Endothelial cell of umbilical vein (primary cell): ENCODE measurements at regions of chr5 and their contacts with region 1.

Region 1: DNA sequence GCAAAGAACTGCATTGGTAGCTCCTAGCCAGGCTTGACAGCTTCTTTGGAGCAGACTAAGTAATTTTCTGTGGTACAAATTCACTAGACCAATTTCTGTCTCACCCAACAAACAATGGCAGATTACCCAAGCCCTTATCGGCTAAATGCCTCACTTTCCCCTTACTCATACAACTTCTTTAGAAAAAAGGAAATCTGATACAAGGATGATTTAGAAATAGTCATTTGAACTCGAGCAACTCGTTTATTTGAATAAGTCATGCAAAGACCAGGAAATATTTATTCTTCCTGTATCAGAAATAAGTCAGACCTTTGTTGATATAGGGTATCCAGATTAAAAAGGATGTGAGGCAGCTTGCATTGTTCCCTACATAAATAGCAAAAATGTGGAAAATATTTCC is 170.4 kb upstream of the CDH6 start:
- DNase-seq: peak; percentile 68
- H3K4me3 ChIP-seq: no peak overlapping the region
- H3K27ac ChIP-seq: no peak overlapping the region
- H3K4me1 ChIP-seq: peaks cover 12% of the 10 kb centered on the region
- H3K27me3 ChIP-seq: no peaks in the 10 kb centered on the region
- CTCF ChIP-seq: no peak
- POLR2A ChIP-seq: no peak

Region 2: GRCh38 chr5:30918171-30918570 is 104.9 kb before region 1 on chr5:
- CTCF ChIA-PET with region 1: no interaction called
- POLR2A ChIA-PET with region 1: no interaction called
- dilution Hi-C with region 1: no loop called
- intact Hi-C with region 1: no loop called
- DNase-seq: no peak
- H3K4me3 ChIP-seq: no peak overlapping the region
- H3K27ac ChIP-seq: no peak overlapping the region
- H3K4me1 ChIP-seq: no peaks in the 10 kb centered on the region
- H3K27me3 ChIP-seq: no peaks in the 10 kb centered on the region
- CTCF ChIP-seq: no peak
- POLR2A ChIP-seq: no peak

Region 3: DNA sequence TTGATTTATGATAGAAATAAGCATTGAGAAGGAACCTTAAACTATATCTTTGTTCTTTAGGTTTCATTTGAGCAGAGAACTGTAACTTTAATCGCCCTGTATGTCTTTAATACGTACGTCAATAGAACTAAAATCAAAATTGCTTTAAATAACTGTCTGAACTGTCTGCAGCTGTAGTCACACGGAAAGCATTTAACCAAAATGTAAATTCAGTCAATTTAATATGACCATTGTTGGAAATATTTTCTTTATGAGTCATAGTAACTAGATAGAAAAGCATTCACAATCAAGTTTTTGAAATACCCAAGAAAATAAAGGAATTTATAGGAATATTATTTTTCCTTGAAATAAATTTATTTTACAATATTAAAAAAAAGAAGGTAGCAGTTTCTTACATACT is 13.3 kb after region 1 on chr5:
- CTCF ChIA-PET with region 1: no interaction called
- POLR2A ChIA-PET with region 1: no interaction called
- dilution Hi-C with region 1: no loop called
- intact Hi-C with region 1: loop called (anchors 2 kb)
- DNase-seq: peak; percentile 39
- H3K4me3 ChIP-seq: no peak overlapping the region
- H3K27ac ChIP-seq: no peak overlapping the region
- H3K4me1 ChIP-seq: peaks cover 11% of the 10 kb centered on the region
- H3K27me3 ChIP-seq: no peaks in the 10 kb centered on the region
- CTCF ChIP-seq: no peak
- POLR2A ChIP-seq: no peak

Region 4: GRCh38 chr5:31047007-31047406 is 23.9 kb after region 1 on chr5:
- CTCF ChIA-PET with region 1: no interaction called
- POLR2A ChIA-PET with region 1: no interaction called
- dilution Hi-C with region 1: no loop called
- intact Hi-C with region 1: no loop called
- DNase-seq: no peak
- H3K4me3 ChIP-seq: no peak overlapping the region
- H3K27ac ChIP-seq: no peak overlapping the region
- H3K4me1 ChIP-seq: no peaks in the 10 kb centered on the region
- H3K27me3 ChIP-seq: no peaks in the 10 kb centered on the region
- CTCF ChIP-seq: no peak
- POLR2A ChIP-seq: no peak

Region 5: DNA sequence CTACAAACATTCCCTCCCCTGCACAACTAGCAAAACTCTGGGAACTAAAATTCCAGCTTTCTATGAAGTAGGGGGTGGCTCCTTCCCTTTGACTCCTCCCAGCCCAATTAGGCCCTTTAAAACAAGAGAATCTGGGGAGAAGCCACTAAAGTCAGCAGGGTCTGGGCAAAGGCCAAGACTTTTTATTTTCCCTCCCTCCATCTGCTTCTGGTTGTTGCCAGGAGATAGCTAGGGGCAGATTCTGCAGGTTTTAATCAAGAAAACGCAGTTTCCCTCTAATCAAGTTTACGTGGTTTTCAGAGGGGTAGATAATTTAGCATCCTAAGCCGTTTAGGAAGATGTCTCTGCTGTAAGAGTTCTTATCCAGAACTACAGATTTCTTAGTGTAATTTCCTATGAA is 55.9 kb after region 1 on chr5:
- CTCF ChIA-PET with region 1: no interaction called
- POLR2A ChIA-PET with region 1: no interaction called
- dilution Hi-C with region 1: no loop called
- intact Hi-C with region 1: no loop called
- DNase-seq: no peak
- H3K4me3 ChIP-seq: no peak overlapping the region
- H3K27ac ChIP-seq: no peak overlapping the region
- H3K4me1 ChIP-seq: no peaks in the 10 kb centered on the region
- H3K27me3 ChIP-seq: no peaks in the 10 kb centered on the region
- CTCF ChIP-seq: no peak
- POLR2A ChIP-seq: no peak